Activated CD4-positive, alpha-beta T cell treated with anti-CD3 and anti-CD28 coated beads, Interleukin-2, amount 10 ng/mL, durations not matched to agents 24 days and 14 days (primary cell): ENCODE measurements at regions of chr11 and their contacts with region 1.

Region 1: DNA sequence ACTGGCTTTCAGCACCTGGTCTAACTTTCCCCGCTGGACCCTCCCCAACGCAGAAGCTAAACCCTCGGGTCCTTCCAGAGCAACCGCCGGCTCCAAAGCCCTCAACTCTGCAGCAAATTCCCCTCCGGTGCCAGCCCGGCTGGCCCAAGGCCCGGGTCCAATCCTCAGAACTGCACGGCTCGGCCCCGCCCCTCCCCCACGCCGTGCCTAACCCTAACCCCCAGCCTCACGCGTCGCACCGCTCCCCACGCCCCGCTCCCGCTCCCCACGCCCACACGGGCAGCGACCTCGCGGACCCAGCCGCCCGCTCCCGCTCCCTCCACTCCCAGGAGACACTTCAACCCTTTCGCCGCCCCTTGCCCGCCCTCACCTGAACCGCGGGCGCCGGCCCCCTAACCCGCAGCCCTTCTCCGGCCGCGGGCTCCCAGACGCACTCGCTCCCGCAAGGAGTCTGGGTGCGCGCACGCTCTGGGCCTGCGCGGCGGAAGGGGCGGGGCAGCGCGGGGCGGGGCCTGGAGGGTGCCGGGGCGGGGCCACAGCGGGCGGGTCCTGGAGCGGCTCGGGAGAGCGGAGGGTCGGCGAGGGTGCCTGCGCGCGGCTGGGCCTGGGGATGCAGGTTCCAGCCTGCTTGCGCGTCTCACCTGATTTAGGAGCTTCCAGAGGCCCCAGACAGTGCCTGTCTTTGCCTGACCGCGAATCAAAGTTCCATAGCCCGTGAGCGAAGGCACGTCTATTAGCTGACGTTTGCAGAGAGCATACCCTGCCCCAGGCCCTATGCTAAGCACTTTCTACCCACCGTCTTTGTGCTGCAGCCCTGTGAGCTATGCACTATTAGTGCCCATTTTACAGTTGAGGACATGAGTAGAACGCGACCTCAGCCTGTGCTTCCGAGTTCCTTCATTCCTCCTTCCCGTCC is at the start of gene NFRKB:
- DNase-seq: peak; percentile 96
- H3K4me3 Mint-ChIP-seq: peak within 1 kb of the TSS; percentile 91
- H3K27ac Mint-ChIP-seq: peak within 1 kb of the TSS; percentile 89
- H3K4me1 Mint-ChIP-seq: peaks cover 27% of the 10 kb centered on the region
- H3K27me3 Mint-ChIP-seq: peaks cover 6% of the 10 kb centered on the region
- total RNA-seq, gene NFRKB: 45.5 and 52.2 TPM in 2 replicates

Region 2: GRCh38 chr11:129814244-129814993 is 81.0 kb before region 1 on chr11:
- intact Hi-C with region 1: loop called (anchors 1 kb)
- DNase-seq: peak; percentile 90
- H3K4me3 Mint-ChIP-seq: peak overlapping the region; percentile 77
- H3K27ac Mint-ChIP-seq: peak overlapping the region; percentile 66
- H3K4me1 Mint-ChIP-seq: peaks cover 29% of the 10 kb centered on the region
- H3K27me3 Mint-ChIP-seq: peaks cover 55% of the 10 kb centered on the region

Region 3: DNA sequence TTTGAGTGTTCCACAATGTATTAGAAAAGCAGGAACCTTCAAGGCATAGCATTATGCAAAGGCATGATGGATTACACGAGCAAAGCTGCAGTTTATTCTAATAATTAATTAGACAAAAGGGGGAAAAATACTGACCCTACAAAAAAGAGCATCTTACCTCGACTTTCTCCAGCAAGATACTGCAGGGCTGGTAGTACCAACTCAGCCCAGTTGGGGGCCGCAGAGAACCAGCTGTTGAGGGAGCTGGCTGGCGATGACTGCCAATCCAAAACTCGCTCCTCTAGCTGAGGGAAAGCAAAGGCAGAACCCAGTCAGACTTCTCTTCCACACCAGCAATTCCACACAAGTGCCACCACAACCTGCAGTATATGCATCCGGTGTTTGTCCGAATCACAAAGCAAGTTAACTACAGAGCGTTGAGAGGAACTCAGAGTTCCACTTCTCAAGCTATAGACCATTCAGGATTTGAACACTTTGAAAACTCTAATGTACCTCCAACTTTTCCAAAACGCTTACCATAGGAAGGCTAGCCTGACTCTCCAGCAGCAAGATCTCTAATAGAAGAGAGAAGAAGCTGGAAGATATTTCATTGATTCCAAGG is 13.7 kb before region 1 on chr11:
- intact Hi-C with region 1: no loop called
- DNase-seq: peak; percentile 83
- H3K4me3 Mint-ChIP-seq: no peak overlapping the region
- H3K27ac Mint-ChIP-seq: no peak overlapping the region
- H3K4me1 Mint-ChIP-seq: no peaks in the 10 kb centered on the region
- H3K27me3 Mint-ChIP-seq: no peaks in the 10 kb centered on the region

Region 4: DNA sequence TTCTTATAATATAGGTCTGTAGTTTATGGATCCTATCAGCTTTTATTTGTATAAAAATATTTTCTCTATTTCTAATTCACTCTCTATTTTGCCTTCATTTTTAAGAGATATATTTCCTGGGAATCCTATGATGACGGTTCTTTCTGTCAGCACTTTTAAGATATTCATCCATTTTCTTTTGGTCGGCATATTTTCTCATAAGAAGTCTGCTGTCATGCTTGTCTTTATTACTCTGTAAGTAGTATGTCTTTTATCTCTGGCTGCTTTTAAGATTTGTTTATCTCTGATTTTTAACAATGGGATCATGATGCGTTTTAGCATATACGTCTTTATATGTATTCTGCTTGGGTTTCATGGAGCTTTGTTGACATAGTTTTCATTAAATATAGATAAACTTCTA is 845.4 kb after region 1 on chr11:
- intact Hi-C with region 1: no loop called
- DNase-seq: no peak
- H3K4me3 Mint-ChIP-seq: no peak overlapping the region
- H3K27ac Mint-ChIP-seq: no peak overlapping the region
- H3K4me1 Mint-ChIP-seq: peaks cover 4% of the 10 kb centered on the region
- H3K27me3 Mint-ChIP-seq: peaks cover under 1% of the 10 kb centered on the region